Heart left ventricle (tissue), 16 donors: ENCODE measurements at regions of chr10 and their contacts with region 1.

Region 1: DNA sequence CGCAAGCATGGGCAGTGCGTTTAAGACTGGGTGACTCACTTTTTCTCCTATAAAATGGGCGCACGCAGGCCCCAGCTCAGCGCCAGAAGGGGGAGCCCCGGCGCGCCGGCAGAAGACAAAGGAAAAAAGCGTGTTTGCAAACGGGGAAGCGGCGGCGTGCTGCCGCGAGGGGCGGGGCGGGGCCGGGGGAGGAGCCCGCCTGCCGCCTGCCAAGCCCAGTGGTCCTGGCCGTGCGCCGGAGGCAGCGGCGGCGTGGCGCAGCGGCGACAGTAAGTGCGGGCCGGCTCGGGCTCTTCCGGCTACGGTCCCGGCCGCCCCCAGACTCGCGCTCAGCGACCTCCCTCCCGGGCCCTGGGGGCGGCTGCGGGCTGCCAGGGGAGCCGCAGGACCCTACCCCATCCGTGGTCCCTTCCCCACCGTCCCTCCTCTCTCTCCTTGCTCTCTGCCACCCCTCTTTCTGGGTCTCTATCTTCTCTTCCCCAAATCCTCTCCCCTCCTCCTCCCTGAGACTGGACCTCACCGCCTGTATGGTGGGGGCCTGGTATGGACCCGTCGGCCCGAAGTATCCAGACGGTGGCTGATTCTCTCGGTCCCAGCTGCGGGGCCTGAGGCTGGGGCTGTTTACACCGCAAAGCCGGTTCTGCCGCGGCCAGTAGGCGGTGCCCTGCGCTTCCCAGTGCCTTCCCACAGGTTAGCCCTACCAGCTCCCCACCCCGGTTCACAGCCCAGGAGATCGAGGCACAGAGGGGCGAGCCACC is at the start of gene SLC29A3:
- DNase-seq: peak; percentile 81 to 92 (median 83)
- ATAC-seq: peak; percentile 56 to 95 (median 90)
- H3K4me3 ChIP-seq: peak within 1 kb of the TSS; percentile 61 to 98 (median 78)
- H3K27ac ChIP-seq: peak within 1 kb of the TSS in 11 of 12 donors; percentile 26 to 83 (median 76)
- H3K4me1 ChIP-seq: peaks cover 0 to 34% (median 11%) of the 10 kb centered on the region in 12 donors
- H3K27me3 ChIP-seq: no peaks in the 10 kb centered on the region
- CTCF ChIP-seq: peak; percentile 23 to 68 (median 49)
- POLR2A ChIP-seq: peak in 1 of 2 donors; percentile 82
- total RNA-seq, gene SLC29A3: 0.76 to 6.2 (median 1.8) TPM

Region 2: DNA sequence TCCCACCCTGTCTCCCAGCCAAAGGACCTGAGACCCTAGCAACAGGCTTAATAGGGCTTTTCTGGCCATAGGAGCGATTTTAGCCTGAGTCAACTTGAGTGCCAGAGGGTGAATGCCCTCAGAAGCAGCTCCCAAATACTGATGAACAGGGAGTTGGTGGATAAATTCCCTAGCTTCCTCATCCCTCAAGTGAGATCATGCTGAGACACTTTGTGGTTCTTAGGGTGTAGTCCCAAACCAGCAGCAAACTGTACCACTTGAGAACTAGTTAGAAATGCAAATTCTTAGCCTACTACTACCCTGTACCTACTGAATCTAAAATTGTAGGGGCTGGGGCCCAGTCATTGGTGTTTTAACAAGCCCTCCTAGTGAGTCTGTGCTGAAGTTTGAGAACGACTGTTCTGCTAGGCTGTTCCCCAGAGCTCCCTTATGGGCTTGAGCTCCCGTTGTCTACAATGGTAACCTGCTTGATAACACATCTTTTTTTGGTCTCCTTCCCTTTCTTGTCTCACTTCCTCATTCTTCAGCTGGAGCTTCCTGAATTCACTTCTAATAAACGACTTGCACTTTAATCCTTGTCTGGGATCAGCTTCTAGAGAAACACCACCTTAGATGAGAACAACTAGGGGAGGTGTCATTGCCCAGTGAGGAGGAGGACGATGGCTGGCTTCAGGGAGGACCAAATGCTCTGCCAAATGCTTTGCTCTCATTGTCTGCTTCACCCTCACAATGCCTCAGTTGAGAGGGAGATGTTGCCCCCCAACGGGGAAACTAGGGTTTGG is 59.3 kb after region 1 on chr10:
- intact Hi-C with region 1: loop called in 9 of 10 experiments (anchors 1 to 5 kb)
- DNase-seq: no peak
- ATAC-seq: no peak
- H3K4me3 ChIP-seq: no peak overlapping the region
- H3K27ac ChIP-seq: peak overlapping the region in 1 of 12 donors; percentile 90
- H3K4me1 ChIP-seq: peaks cover 0 to 36% (median 5%) of the 10 kb centered on the region in 12 donors
- H3K27me3 ChIP-seq: no peaks in the 10 kb centered on the region
- CTCF ChIP-seq: no peak
- POLR2A ChIP-seq: no peak

Region 3: DNA sequence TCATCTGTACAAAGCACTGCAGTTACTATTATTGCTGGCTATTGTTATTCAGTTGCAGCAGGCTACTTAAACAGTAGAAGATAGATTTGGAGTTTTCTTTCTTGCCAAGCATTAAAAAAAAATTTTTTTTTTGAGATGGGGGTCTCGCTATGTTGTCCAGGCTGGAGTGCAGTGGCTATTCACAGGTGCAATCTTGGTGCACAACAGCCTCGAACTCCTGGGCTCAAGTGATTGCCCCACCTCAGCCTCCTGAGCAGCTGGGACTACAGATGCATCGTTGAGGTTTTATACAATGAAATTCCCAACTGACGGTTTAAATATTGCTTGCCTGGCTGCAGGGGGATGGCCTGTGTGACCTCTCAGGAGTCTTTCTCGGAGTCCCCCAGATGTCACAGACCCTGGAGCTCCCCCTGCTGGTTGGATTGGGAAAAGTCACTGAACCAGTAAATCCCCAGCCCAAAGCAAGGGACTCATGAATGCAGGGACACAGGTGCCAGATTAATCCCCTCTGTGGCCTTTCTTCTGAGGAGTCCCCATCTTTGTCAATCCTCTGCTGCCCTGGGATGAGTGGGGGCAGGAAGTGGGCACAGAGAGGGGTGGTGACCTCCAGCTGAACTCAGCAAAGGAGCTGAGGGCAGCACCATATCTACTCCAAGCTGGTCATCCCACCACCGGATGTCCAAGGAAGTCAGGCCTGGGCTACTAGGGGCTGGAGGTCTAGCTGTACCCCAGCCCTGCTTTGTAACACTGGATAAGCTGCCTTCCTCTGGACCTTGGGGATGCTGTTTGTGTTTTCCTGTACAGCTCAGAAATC is 250.8 kb after region 1 on chr10:
- intact Hi-C with region 1: loop called (anchors 1 to 10 kb)
- DNase-seq: peak; percentile 51 to 74 (median 71)
- ATAC-seq: peak in 3 of 4 donors; percentile 22 to 73 (median 62)
- H3K4me3 ChIP-seq: no peak overlapping the region
- H3K27ac ChIP-seq: no peak overlapping the region
- H3K4me1 ChIP-seq: no peaks in the 10 kb centered on the region
- H3K27me3 ChIP-seq: no peaks in the 10 kb centered on the region
- CTCF ChIP-seq: peak; percentile 80 to 94 (median 86)
- POLR2A ChIP-seq: no peak

Region 4: GRCh38 chr10:71708301-71708703 is 389.1 kb after region 1 on chr10:
- intact Hi-C with region 1: loop called in 7 of 10 experiments (anchors 2 to 10 kb)
- DNase-seq: peak; percentile 46 to 86 (median 62)
- ATAC-seq: peak in 3 of 4 donors; percentile 50 to 62 (median 52)
- H3K4me3 ChIP-seq: no peak overlapping the region
- H3K27ac ChIP-seq: no peak overlapping the region
- H3K4me1 ChIP-seq: peaks cover 0 to 30% (median 18%) of the 10 kb centered on the region in 12 donors
- H3K27me3 ChIP-seq: no peaks in the 10 kb centered on the region
- CTCF ChIP-seq: peak; percentile 79 to 90 (median 87)
- POLR2A ChIP-seq: no peak

Region 5: DNA sequence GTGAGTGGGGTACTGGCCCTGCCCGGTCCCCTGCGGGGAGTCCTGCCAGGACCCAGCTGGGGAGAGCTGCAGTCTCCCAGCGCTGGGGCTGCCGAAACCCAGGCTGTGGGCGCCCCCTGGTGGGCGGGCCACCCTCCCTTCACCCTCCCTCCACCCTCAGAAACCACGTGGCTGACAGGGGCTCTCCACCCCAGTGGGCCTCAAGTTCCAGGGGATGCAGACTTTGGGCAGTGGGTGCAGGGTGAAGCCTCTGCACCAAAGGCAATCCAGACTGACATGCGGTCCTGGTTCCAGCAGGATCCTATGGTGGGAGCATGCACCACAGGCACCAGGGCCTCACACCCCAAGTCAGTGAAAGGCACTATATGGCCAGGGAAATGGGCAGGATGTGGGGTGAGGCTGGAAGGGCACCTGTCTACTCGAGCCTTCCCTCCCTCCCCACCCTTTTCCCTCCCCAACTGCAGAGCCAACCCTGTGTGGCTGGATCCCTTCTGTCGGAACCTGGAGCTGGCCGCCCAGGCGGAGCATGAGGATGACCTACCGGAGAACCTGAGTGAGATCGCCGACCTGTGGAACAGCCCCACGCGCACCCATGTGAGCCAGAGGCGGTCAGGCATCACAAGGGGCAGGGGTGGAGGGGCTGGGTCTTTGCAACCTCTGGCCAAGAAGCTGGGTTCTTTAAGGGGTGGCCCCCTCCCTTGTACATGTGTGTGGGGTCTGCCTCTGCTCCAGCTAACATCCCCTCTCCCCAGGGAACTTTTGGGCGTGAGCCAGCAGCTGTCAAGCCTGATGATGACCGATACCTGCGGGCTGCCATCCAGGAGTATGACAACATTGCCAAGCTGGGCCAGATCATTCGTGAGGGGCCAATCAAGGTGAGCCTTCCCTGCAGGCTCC is 493.0 kb after region 1 on chr10:
- intact Hi-C with region 1: loop called in 8 of 10 experiments (anchors 5 to 10 kb)
- DNase-seq: peak; percentile 57 to 87 (median 68)
- ATAC-seq: peak; percentile 66 to 87 (median 84)
- H3K4me3 ChIP-seq: no peak overlapping the region
- H3K27ac ChIP-seq: no peak overlapping the region
- H3K4me1 ChIP-seq: peaks cover 0 to 30% (median 10%) of the 10 kb centered on the region in 12 donors
- H3K27me3 ChIP-seq: peaks cover 0 to 9% (median 0%) of the 10 kb centered on the region in 9 donors
- CTCF ChIP-seq: peak; percentile 54 to 89 (median 84)
- POLR2A ChIP-seq: no peak

Region 6: DNA sequence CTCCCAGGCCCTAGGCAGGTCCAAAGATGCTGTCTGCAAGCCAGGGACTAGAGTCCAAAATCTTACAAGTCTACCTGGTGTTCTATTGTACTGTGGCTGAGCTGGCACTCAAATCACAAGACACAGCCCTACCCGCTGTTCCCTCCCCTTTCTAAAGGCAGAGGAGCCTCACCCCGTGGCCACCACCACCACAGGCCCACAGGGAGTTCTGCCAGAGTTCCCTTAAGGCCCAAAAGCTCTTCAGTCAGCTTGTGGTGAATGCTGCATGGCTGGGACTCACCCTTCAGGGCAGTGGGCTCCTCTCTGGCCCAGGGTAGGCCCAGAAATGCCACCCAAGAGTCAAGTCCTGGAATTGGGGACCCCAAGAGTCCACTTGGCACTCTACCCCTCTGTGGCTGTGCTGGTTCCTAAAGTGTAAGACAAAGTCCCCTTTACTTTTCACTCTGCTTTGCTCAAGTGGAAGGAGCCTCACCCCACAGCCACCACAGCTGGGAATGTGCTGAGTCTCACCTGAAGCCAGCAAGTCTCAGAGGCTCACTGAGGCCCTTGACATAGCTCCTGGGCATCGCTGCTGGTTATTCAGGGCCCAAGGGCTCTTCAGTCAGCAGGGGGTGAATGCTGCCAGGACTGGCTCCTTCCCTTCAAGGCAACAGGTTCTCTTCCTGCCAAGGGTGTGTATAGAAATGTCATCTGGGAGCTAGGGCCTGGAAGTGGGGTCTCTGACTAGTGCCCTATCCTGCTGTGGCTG is 580.6 kb after region 1 on chr10:
- intact Hi-C with region 1: loop called in 6 of 10 experiments (anchors 5 to 10 kb)
- DNase-seq: peak in 1 of 5 donors; percentile 9
- ATAC-seq: no peak
- H3K4me3 ChIP-seq: no peak overlapping the region
- H3K27ac ChIP-seq: no peak overlapping the region
- H3K4me1 ChIP-seq: peaks cover 0 to 16% (median 0%) of the 10 kb centered on the region in 12 donors
- H3K27me3 ChIP-seq: no peaks in the 10 kb centered on the region
- CTCF ChIP-seq: no peak
- POLR2A ChIP-seq: no peak